ENCODE measurements at regions of chr3 and their contacts with region 1.

Region 1: GRCh38 chr3:197599089-197599765 is 43.5 kb upstream of the BDH1 start:
- DNase-seq: peak; percentile 23
- ATAC-seq: peak; percentile 100
- H3K4me3 ChIP-seq: no peak overlapping the region
- H3K27ac ChIP-seq: no peak overlapping the region
- H3K4me1 ChIP-seq: peaks cover 2% of the 10 kb centered on the region; the same call in 1 of the 2 replicates
- H3K27me3 ChIP-seq: no peaks in the 10 kb centered on the region
- CTCF ChIP-seq: peak; percentile 90 to 94 (median 94)
- EP300 ChIP-seq: no peak
- POLR2A ChIP-seq: peak; percentile 32; the same call in 1 of the 2 replicates
- RAD21 ChIP-seq: peak; percentile 91

Region 2: DNA sequence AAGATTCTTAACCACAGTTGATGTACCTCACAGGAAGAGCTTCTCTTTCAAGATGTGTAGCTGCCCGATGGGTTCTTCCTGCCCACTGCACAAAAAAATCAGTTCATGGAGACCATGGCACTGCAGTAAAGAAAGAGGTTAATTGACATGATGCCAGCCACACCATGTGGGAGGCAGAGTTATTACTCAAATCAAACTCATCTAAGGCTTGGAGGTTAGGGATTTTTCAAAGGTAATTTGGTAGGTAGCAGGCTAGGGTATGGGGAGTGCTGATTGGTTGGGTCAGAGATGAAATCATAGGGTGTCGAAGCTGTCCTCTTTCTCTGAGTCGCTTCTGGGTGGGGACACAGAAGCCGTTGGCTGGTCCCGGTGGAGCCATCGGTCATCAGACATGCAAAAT is 14.0 kb after region 1 on chr3:
- CTCF ChIA-PET with region 1: interaction called, 59 read pairs
- POLR2A ChIA-PET with region 1: no interaction called
- RAD21 ChIA-PET with region 1: interaction called, 3 read pairs
- SMC1A ChIA-PET with region 1: interaction called, 7 read pairs
- in situ Hi-C with region 1: no loop called
- intact Hi-C with region 1: no loop called
- DNase-seq: no peak
- ATAC-seq: no peak
- H3K4me3 ChIP-seq: no peak overlapping the region
- H3K27ac ChIP-seq: no peak overlapping the region
- H3K4me1 ChIP-seq: no peaks in the 10 kb centered on the region
- H3K27me3 ChIP-seq: no peaks in the 10 kb centered on the region
- CTCF ChIP-seq: no peak
- EP300 ChIP-seq: no peak
- POLR2A ChIP-seq: no peak
- RAD21 ChIP-seq: no peak

Region 3: GRCh38 chr3:197667978-197668377 is 68.8 kb after region 1 on chr3:
- CTCF ChIA-PET with region 1: interaction called, 26 read pairs
- POLR2A ChIA-PET with region 1: no interaction called
- RAD21 ChIA-PET with region 1: interaction called, 5 read pairs
- SMC1A ChIA-PET with region 1: interaction called, 6 read pairs
- in situ Hi-C with region 1: no loop called
- intact Hi-C with region 1: loop called (anchors 5 kb)
- DNase-seq: no peak
- ATAC-seq: no peak
- H3K4me3 ChIP-seq: no peak overlapping the region
- H3K27ac ChIP-seq: no peak overlapping the region
- H3K4me1 ChIP-seq: no peaks in the 10 kb centered on the region
- H3K27me3 ChIP-seq: no peaks in the 10 kb centered on the region
- CTCF ChIP-seq: no peak
- EP300 ChIP-seq: no peak
- POLR2A ChIP-seq: no peak
- RAD21 ChIP-seq: no peak

Region 4: DNA sequence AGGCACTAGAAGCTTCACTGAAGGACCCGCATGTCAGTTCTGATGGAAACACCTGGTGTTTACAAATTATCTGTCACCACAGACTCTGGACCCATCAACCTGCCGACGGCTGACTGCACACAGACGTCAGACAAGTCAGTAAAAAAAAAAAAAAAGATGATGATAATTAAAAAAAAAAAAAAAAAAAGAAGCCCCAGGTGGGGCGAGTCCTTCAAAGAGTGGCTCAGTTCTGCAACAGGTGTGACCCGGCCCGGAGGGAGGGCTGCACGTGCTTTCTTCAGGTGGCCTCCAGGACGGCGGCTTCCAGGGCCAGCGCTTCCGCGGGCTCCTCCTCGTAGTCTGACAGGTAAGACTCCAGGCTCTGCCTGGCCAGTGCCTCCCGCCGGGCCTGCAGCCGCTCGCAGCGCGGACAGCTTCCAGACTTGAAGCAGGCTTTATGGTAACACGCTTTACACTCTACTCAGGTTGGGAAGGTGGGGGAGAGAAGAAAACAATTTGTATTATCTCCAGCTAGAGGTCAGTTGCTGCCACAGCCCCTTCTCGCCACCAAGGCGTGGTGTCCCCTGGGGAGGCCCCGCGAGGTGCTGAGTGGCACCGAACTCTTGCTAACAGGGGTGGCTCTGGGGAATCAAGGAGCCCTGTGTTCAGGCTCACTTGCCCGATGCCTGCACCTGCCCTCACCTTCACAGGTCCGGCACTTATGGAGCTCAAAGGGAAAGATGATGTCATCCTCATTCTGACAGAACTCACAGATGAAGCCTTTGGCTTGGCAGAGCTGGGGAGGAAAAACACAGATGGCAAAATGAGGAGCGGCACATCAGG is 75.7 kb after region 1 on chr3:
- CTCF ChIA-PET with region 1: interaction called, 26 read pairs
- POLR2A ChIA-PET with region 1: no interaction called
- RAD21 ChIA-PET with region 1: interaction called, 5 read pairs
- SMC1A ChIA-PET with region 1: interaction called, 6 read pairs
- in situ Hi-C with region 1: no loop called
- intact Hi-C with region 1: no loop called
- DNase-seq: no peak
- ATAC-seq: no peak
- H3K4me3 ChIP-seq: no peak overlapping the region
- H3K27ac ChIP-seq: no peak overlapping the region
- H3K4me1 ChIP-seq: no peaks in the 10 kb centered on the region
- H3K27me3 ChIP-seq: no peaks in the 10 kb centered on the region
- CTCF ChIP-seq: no peak
- EP300 ChIP-seq: no peak
- POLR2A ChIP-seq: no peak
- RAD21 ChIP-seq: no peak

Region 5: GRCh38 chr3:197801891-197802778 is 202.9 kb after region 1 on chr3:
- CTCF ChIA-PET with region 1: interaction called, 6 read pairs
- POLR2A ChIA-PET with region 1: interaction called, 3 read pairs
- RAD21 ChIA-PET with region 1: no interaction called
- SMC1A ChIA-PET with region 1: interaction called, 3 read pairs
- in situ Hi-C with region 1: no loop called
- intact Hi-C with region 1: loop called (anchors 2 kb)
- DNase-seq: peak; percentile 40
- ATAC-seq: peak; percentile 68
- H3K4me3 ChIP-seq: peak overlapping the region; percentile 24; the same call in 1 of the 2 replicates
- H3K27ac ChIP-seq: peak overlapping the region; percentile 54
- H3K4me1 ChIP-seq: peaks cover 37% of the 10 kb centered on the region
- H3K27me3 ChIP-seq: no peaks in the 10 kb centered on the region
- CTCF ChIP-seq: peak; percentile 49 to 56 (median 51)
- EP300 ChIP-seq: no peak
- POLR2A ChIP-seq: no peak
- RAD21 ChIP-seq: peak; percentile 46

Region 6: DNA sequence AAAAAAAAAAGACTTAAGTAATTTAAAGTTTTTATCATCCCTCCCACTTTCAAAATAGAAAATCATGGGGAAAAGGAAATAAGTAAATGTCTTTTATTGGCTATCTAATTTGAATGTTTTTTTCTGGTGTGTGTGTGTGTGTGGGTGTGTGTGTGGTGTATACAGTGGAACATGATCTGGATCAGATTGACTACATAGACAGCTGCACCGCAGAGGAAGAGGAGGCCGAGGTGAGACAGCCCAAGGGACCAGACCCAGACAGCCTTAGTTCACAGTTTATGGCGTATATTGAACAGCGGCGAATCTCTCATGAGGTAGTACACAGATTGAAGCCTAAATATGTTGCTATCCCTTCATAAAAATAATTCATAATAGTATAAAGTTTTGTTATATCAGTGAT is 236.3 kb after region 1 on chr3:
- CTCF ChIA-PET with region 1: no interaction called
- POLR2A ChIA-PET with region 1: no interaction called
- RAD21 ChIA-PET with region 1: no interaction called
- SMC1A ChIA-PET with region 1: no interaction called
- in situ Hi-C with region 1: no loop called
- intact Hi-C with region 1: no loop called
- DNase-seq: no peak
- ATAC-seq: peak; percentile 68
- H3K4me3 ChIP-seq: no peak overlapping the region
- H3K27ac ChIP-seq: peak overlapping the region; percentile 30
- H3K4me1 ChIP-seq: peaks cover 10% of the 10 kb centered on the region
- H3K27me3 ChIP-seq: no peaks in the 10 kb centered on the region
- CTCF ChIP-seq: no peak
- EP300 ChIP-seq: no peak
- POLR2A ChIP-seq: no peak
- RAD21 ChIP-seq: no peak